ENCODE measurements at regions of chr17 and their contacts with region 1.

Region 1: DNA sequence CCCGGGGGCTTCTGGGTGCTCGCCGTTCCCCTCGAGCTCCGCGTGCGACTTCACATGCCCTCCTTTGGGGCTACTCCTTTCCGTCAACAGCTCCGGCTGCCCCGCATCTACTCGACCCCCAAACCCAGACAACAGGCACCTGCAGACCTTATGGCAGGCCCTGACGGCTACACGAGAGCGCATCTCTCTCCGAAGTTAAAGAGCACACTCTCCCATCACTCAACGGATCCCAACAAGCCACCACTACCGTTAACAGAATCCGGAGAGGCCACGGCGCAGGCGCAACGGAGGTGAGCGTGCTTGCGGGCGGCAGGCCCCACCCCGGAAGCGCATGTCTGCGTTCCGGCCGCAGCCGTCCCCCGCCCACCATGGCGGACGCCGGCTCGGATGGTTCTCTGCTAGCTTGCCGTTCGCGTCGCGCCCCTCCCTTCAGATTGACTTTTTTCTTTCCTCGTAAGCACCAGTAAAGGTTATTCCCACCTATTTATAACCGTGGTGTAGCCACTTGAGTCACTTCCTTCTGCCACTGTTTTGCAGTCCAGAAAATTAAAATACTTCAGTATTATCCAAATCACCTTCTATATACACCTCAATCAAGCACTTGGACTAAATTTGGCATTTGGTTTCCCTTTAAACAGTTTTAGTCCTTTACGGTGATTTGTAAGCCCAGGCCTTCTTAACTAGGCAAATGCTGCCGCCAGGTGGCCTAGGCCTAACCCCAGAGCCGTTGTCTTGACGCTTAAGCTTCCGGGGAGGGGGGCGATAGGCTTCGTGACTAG is at the start of gene POLG2:
- DNase-seq: peak; percentile 96
- H3K4me3 ChIP-seq: peak within 1 kb of the TSS; percentile 78 to 81
- H3K27ac ChIP-seq: peak within 1 kb of the TSS; percentile 87 to 99
- H3K4me1 ChIP-seq: peaks cover 27 to 29% of the 10 kb centered on the region in 2 experiments
- H3K27me3 ChIP-seq: no peaks in the 10 kb centered on the region
- CTCF ChIP-seq: peak; percentile 74
- EP300 ChIP-seq: no peak
- RAD21 ChIP-seq: peak; percentile 43
- polyA plus RNA-seq, gene POLG2: 18.0 and 20.1 TPM in 2 replicates

Region 2: GRCh38 chr17:64479650-64480049 is 17.3 kb before region 1 on chr17:
- CTCF ChIA-PET with region 1: interaction called, 76 read pairs
- POLR2A ChIA-PET with region 1: interaction called, 10 read pairs
- DNase-seq: no peak
- H3K4me3 ChIP-seq: no peak overlapping the region
- H3K27ac ChIP-seq: no peak overlapping the region
- H3K4me1 ChIP-seq: no peaks in the 10 kb centered on the region
- H3K27me3 ChIP-seq: no peaks in the 10 kb centered on the region
- CTCF ChIP-seq: no peak
- EP300 ChIP-seq: no peak
- RAD21 ChIP-seq: no peak

Region 3: GRCh38 chr17:64554028-64554637 is 57.2 kb after region 1 on chr17:
- CTCF ChIA-PET with region 1: no interaction called
- POLR2A ChIA-PET with region 1: no interaction called
- DNase-seq: no peak
- H3K4me3 ChIP-seq: no peak overlapping the region
- H3K27ac ChIP-seq: no peak overlapping the region
- H3K4me1 ChIP-seq: no peaks in the 10 kb centered on the region
- H3K27me3 ChIP-seq: no peaks in the 10 kb centered on the region
- CTCF ChIP-seq: no peak
- EP300 ChIP-seq: no peak
- RAD21 ChIP-seq: no peak

Region 4: DNA sequence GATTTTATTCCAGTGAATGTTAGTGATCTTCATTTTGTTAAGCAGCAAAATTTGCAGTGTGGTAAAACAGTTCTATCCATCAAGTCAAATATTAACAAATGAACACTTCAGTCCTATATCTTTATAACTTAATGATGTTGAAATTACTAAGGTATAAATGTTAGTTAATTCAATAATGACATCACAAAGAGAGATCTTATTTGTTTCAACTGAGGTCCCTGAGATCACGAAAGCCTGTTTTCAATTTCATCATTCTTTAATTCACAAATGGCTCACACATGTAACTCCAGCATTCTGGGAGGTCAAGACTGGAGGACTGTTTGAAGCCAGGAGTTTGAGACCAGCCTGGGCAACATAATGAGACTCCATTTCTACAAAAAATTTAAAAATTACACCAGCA is 151.3 kb after region 1 on chr17:
- CTCF ChIA-PET with region 1: interaction called, 17 read pairs
- POLR2A ChIA-PET with region 1: interaction called, 4 read pairs
- DNase-seq: no peak
- H3K4me3 ChIP-seq: no peak overlapping the region
- H3K27ac ChIP-seq: peak overlapping the region in 1 of 2 experiments; percentile 37; a peak in 1 of 4 replicates
- H3K4me1 ChIP-seq: peaks cover 3 to 14% of the 10 kb centered on the region in 2 experiments; a peak in 3 of 4 replicates
- H3K27me3 ChIP-seq: no peaks in the 10 kb centered on the region
- CTCF ChIP-seq: no peak
- EP300 ChIP-seq: no peak
- RAD21 ChIP-seq: no peak

Measured in SK-N-SH (cell line).